ENCODE measurements at regions of chr1 and their contacts with region 1.

Region 1: GRCh38 chr1:209784265-209785169 is at the start of gene C1orf74:
- DNase-seq: peak; percentile 94 to 97
- ATAC-seq: peak; percentile 98
- H3K4me3 ChIP-seq: peak within 1 kb of the TSS; percentile 58 to 86 (median 76)
- H3K27ac ChIP-seq: peak within 1 kb of the TSS; percentile 75 to 88 (median 82)
- H3K4me1 ChIP-seq: peaks cover 12 to 17% of the 10 kb centered on the region in 2 donors
- H3K27me3 ChIP-seq: peaks cover 0 to 13% (median 4%) of the 10 kb centered on the region in 3 donors
- CTCF ChIP-seq: no peak
- POLR2A ChIP-seq: peak; percentile 37 to 49
- total RNA-seq, gene C1orf74: 0.38 to 0.82 (median 0.54) TPM

Region 2: DNA sequence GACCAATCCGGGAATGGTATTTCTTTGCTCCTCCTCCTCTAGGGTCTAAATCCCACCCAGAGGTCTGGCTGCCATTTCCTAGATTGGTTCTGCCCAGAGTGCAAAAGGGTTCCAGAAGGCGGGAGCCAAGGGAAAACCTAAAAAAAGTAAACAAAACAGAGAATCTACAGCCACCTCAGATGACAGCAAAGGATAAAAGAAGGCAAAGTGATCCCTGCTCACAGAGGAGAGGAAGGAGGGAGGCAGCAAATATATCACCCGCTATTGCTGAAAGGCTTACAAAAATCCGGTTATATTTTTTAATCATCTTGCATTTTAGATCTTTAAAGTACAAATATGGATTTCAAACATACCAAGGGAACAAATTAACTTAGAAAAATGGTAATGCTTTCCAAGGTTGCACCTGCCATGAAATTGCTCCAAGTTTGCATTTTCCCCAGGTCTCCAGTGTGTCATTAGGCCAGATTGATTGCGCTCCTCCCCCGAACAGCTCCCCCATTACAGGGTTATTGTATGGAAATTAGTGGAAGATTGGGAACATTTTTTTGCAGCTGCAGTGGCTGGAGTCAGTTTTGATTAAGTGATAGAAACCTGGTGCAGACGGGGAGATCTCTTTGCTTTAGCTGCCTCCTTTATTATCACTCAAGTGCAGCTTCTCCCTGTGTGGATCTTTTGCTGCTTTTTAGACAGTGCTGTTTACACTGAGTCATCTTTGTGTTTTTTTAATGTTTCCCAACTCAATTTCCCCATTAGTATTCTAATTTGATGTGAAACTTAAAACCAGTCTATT is 481.5 kb before region 1 on chr1:
- in situ Hi-C with region 1: no loop called
- intact Hi-C with region 1: no loop called
- DNase-seq: no peak
- ATAC-seq: no peak
- H3K4me3 ChIP-seq: no peak overlapping the region
- H3K27ac ChIP-seq: no peak overlapping the region
- H3K4me1 ChIP-seq: no peaks in the 10 kb centered on the region
- H3K27me3 ChIP-seq: no peaks in the 10 kb centered on the region
- CTCF ChIP-seq: no peak
- POLR2A ChIP-seq: no peak

Region 3: DNA sequence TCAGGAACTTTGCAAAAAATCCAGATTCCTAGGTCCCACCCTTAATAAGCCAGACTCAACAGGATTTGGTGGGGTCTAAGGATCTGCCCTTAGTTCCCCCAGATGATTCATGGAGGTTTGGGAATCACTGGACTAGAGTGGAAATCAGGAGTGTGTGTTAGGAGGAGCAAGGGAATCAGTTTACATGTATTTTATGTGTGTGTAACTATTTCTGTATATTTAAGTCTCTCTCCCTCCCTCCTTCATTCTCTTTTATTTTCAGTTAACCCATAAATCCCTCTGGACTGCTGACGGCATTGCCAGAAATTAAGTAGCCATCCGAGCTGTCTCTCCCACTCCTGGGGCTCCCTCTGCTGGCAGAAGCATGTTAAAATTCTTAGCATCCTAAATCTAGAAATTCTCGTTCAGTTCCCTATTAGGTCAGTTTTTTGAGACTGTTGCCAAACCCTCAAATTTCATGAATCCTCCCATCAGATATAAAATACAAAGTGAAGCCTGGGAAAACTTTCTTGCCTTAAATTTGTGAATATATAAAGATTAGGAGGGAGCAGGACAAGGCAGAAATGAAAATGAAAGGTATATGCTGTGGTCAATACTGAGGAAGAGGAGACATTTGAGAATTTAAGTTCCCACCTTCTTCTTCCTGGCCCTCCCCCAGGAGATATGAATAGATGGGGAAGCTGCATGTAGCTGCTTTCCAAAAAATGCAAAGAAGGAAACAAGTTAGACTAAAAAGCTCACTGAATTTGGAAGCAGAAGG is 91.6 kb before region 1 on chr1:
- in situ Hi-C with region 1: no loop called
- intact Hi-C with region 1: no loop called
- DNase-seq: peak; percentile 29 to 59
- ATAC-seq: peak; percentile 56 to 85
- H3K4me3 ChIP-seq: no peak overlapping the region
- H3K27ac ChIP-seq: no peak overlapping the region
- H3K4me1 ChIP-seq: peaks cover 0 to 11% of the 10 kb centered on the region in 2 donors
- H3K27me3 ChIP-seq: no peaks in the 10 kb centered on the region
- CTCF ChIP-seq: peak; percentile 84 to 87 (median 87)
- POLR2A ChIP-seq: no peak

Region 4: GRCh38 chr1:209827384-209828262 is 43.1 kb after region 1 on chr1 and contains the start of gene UTP25:
- in situ Hi-C with region 1: no loop called
- intact Hi-C with region 1: loop called (anchors 2 kb)
- DNase-seq: peak; percentile 73 to 88
- ATAC-seq: peak; percentile 92 to 97
- H3K4me3 ChIP-seq: peak within 1 kb of the TSS; percentile 82 to 92 (median 88)
- H3K27ac ChIP-seq: peak within 1 kb of the TSS; percentile 61 to 83 (median 64)
- H3K4me1 ChIP-seq: peaks cover 6 to 8% of the 10 kb centered on the region in 2 donors
- H3K27me3 ChIP-seq: no peaks in the 10 kb centered on the region
- CTCF ChIP-seq: peak; percentile 37 to 66 (median 61)
- POLR2A ChIP-seq: peak in 1 of 2 donors; percentile 14
- total RNA-seq, gene UTP25: 3.9 to 4.6 (median 4.2) TPM